Activated CD8-positive, alpha-beta memory T cell treated with anti-CD3 and anti-CD28 coated beads, Interleukin-2, amount 10 ng/mL, durations not matched to agents 7 days and 5 days (primary cell): ENCODE measurements at regions of chr17 and their contacts with region 1.

Region 1: DNA sequence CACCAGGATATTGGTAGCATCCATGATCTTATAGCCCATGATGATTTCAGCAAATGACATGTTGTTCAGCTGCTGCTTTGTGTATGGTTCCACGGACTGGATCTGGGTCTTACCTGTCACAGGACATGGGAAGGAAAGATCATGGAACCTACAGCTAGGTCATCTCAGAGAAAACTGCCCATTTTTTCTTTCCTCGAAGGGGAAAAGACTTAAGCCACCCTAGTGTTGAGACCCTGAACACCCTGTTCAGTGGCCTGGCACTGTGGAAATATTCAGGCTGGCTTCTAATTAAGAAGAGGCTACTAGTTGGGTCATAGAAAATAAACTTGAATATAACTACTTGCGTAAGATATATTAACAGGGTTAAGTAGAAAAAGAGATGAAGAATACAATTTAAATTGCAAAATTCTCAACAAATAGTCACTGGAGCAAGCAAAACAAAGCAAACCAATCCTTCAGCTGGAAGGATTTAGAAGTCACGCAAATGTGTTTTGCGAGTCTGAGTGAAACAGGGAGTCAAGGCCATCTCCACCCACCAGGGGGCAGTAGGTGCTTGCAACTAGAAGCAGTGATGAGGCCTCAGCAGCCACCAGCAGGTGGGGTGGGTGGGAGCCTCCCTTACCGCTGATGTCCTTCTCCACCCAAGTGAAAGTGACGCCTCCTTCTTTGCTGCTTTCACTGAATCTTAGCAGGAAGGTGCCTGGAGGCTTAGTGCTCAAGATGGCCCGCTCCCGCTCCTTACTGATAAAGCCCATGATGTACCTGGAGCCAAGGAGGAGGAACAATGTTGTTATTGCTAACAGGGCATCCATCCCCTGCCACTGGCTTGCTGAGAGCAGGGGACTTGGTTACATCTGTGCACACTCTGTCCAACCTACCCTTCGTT is 34.3 kb downstream of the STAT5A start:
- DNase-seq: peak; percentile 97
- ATAC-seq: peak; percentile 96
- H3K4me3 Mint-ChIP-seq: no peak overlapping the region
- H3K27ac Mint-ChIP-seq: peak overlapping the region; percentile 24
- H3K4me1 Mint-ChIP-seq: peaks cover 44% of the 10 kb centered on the region
- H3K27me3 Mint-ChIP-seq: no peaks in the 10 kb centered on the region

Region 2: DNA sequence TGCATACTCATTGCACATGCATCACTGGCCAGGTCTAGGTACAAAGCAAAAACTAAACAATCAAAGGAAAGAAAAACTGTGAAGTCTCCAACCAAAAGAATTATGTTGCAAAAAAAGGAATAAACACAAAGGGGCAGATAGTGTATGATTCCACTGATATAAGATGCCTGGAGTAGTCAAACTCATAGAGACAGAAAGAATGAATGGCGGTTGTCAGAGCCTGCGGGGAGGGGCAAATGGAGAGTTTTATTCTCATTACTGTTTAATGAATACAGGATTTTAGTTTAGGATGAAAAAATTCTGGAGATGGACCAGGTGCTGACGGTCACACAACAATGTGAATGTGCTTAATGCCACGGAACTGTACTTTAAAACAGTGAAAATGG is 67.2 kb before region 1 on chr17:
- CTCF ChIA-PET with region 1: no interaction called
- DNase-seq: no peak
- ATAC-seq: no peak
- H3K4me3 Mint-ChIP-seq: no peak overlapping the region
- H3K27ac Mint-ChIP-seq: no peak overlapping the region
- H3K4me1 Mint-ChIP-seq: peaks cover 38% of the 10 kb centered on the region
- H3K27me3 Mint-ChIP-seq: no peaks in the 10 kb centered on the region

Region 3: DNA sequence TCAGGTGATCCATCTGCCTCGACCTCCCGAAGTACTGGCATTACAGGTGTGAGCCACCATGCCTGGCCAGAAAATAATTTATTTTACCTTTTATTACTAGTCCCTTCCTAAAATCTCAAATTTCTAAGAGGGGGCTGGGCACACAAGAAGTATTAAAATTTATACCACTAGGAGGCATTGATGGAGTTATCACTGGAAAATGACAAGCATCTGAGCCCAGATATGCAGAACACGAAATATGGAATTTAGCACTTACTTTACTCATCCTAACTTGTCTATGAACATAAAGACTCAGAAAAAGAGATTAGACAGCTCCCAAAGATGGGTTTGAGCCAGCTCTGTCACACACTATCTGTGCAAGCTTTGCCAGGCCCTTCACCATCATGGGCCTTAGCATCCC is 12.1 kb after region 1 on chr17:
- CTCF ChIA-PET with region 1: interaction called, 31 read pairs
- DNase-seq: no peak
- ATAC-seq: no peak
- H3K4me3 Mint-ChIP-seq: no peak overlapping the region
- H3K27ac Mint-ChIP-seq: no peak overlapping the region
- H3K4me1 Mint-ChIP-seq: peaks cover 53% of the 10 kb centered on the region
- H3K27me3 Mint-ChIP-seq: no peaks in the 10 kb centered on the region

Region 4: GRCh38 chr17:42517516-42517915 is 194.9 kb after region 1 on chr17:
- CTCF ChIA-PET with region 1: interaction called, 21 read pairs
- DNase-seq: peak; percentile 85
- ATAC-seq: peak; percentile 91
- H3K4me3 Mint-ChIP-seq: no peak overlapping the region
- H3K27ac Mint-ChIP-seq: no peak overlapping the region
- H3K4me1 Mint-ChIP-seq: no peaks in the 10 kb centered on the region
- H3K27me3 Mint-ChIP-seq: peaks cover 31% of the 10 kb centered on the region